ENCODE measurements at regions of chr4 and their contacts with region 1.

Region 1: DNA sequence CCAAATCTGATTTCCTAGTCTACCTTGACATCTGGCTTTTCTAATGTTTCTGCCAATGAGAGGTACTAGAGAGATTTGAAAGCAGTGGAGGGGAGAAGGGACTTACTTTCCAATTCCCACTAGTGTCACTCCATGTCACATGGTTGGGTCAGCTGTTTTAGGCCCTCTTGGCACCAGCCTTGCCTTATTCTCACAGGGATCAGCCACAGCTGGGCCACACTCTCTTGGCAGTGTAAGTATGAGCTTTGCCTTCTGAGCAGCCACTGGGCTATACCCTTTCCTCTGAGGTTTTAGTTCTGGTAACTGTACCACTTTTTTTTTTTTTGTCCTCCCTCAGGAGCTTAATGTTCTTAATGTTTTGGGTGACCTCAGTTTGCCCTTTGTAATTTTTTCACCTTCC is 10.2 kb upstream of the ADH1C start:
- DNase-seq: no peak
- H3K4me3 ChIP-seq: no peak overlapping the region
- H3K27ac ChIP-seq: no peak overlapping the region
- H3K27me3 ChIP-seq: no peaks in the 10 kb centered on the region
- CTCF ChIP-seq: no peak

Region 2: GRCh38 chr4:99381588-99382175 is 18.9 kb after region 1 on chr4:
- intact Hi-C with region 1: loop called in 1 of 2 experiments (anchors 2 kb)
- DNase-seq: no peak
- H3K4me3 ChIP-seq: no peak overlapping the region
- H3K27ac ChIP-seq: no peak overlapping the region
- H3K27me3 ChIP-seq: peaks cover 0 to 4% (median 0%) of the 10 kb centered on the region in 45 donors
- CTCF ChIP-seq: no peak